ENCODE measurements at regions of chr3 and their contacts with region 1.

Region 1: DNA sequence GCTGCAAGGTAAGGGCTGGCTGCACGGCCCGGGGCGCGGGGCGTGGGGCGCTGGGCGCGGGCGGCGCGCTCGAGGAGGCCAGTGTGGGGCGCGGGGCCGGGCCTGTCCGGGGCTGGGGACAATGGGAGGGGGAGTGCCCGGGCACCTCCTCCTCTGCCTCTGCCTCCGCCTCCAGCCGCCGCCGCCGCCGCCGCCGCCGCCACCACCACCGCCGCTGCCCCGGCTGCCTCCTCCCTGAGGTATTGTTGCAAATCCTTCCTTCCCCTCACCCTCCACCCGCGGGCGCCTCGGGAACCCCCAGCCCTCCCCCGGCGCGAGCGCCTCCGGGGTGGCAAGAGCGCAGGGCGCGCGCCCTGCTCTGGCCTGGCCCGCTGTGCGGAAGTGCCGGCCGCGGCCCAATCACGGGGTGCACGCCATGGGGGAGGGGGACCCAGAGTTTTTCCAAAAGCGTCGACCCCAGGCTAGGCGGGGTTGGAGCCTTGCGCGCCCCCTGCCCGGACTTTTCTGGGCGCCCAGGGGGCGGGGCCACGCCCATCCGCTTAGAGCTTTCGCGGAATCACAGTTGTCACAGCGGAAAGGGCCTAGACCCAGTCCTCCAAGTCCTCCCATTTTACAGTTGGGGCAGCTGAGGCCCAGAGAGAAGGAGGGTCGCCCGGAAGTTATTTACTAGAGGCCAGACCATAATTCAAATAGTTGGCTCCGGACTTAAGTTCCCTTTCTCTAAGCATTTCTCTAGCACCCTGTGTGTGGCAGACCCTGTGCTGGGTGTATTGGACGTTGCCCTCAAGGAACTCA is at the start of gene LPP:
- DNase-seq: peak; percentile 64 to 88 (median 77)
- ATAC-seq: peak; percentile 92
- H3K4me3 ChIP-seq: peak within 1 kb of the TSS; percentile 76
- H3K4me3 Mint-ChIP-seq: peak within 1 kb of the TSS; percentile 78 to 95 (median 91)
- H3K27ac ChIP-seq: peak within 1 kb of the TSS; percentile 75
- H3K27ac Mint-ChIP-seq: peak within 1 kb of the TSS; percentile 58 to 98 (median 88)
- H3K4me1 ChIP-seq: peaks cover 21 to 29% of the 10 kb centered on the region in 2 donors
- H3K4me1 Mint-ChIP-seq: peaks cover 40 to 67% (median 58%) of the 10 kb centered on the region in 7 donors
- H3K27me3 ChIP-seq: no peaks in the 10 kb centered on the region
- H3K27me3 Mint-ChIP-seq: no peaks in the 10 kb centered on the region
- total RNA-seq, gene LPP: 12.5 to 95.2 (median 52.3) TPM

Region 2: GRCh38 chr3:187802928-187803259 is 351.3 kb before region 1 on chr3:
- CTCF ChIA-PET with region 1: no interaction called
- POLR2A ChIA-PET with region 1: no interaction called
- intact Hi-C with region 1: loop called in 1 of 2 experiments (anchors 1 kb)
- DNase-seq: peak in 1 of 9 donors; percentile 66
- ATAC-seq: peak; percentile 56
- H3K4me3 ChIP-seq: no peak overlapping the region
- H3K4me3 Mint-ChIP-seq: peak overlapping the region in 6 of 10 donors; percentile 14 to 69 (median 34)
- H3K27ac ChIP-seq: no peak overlapping the region
- H3K27ac Mint-ChIP-seq: peak overlapping the region in 1 of 9 donors; percentile 90
- H3K4me1 ChIP-seq: peaks cover 22 to 47% of the 10 kb centered on the region in 2 donors
- H3K4me1 Mint-ChIP-seq: peaks cover 23 to 93% (median 44%) of the 10 kb centered on the region in 7 donors
- H3K27me3 ChIP-seq: no peaks in the 10 kb centered on the region
- H3K27me3 Mint-ChIP-seq: no peaks in the 10 kb centered on the region

Region 3: DNA sequence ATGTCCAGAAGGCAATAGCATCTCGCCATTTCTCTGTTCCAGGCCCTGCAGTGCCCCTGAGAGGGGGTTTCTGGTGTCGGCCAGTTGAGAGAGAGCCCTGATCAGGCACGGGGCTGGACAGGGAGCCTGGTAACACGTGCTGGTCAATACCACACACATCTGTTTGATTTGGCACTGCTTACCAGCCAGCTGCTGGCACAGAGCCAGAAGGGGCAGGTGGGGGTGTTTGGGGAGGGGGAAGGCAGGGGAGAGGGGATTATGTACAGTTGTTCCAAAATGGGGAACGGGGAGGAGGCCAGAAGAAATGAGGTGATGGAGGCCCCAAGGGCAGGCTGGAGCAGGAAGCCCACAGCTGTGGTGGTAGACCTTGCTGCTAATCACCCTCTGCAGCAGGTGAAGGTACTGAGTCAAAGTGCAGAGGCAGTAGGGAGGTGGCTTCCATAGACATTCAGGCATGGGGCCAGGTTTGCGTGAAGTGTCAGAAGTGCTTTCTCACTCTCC is 153.8 kb before region 1 on chr3:
- CTCF ChIA-PET with region 1: no interaction called
- POLR2A ChIA-PET with region 1: no interaction called
- intact Hi-C with region 1: loop called in 1 of 2 experiments (anchors 5 kb)
- DNase-seq: no peak
- ATAC-seq: no peak
- H3K4me3 ChIP-seq: peak overlapping the region; percentile 13
- H3K4me3 Mint-ChIP-seq: peak overlapping the region; percentile 42 to 83 (median 77)
- H3K27ac ChIP-seq: no peak overlapping the region
- H3K27ac Mint-ChIP-seq: peak overlapping the region; percentile 27 to 94 (median 85)
- H3K4me1 ChIP-seq: peaks cover 26 to 37% of the 10 kb centered on the region in 2 donors
- H3K4me1 Mint-ChIP-seq: peaks cover 41 to 75% (median 64%) of the 10 kb centered on the region in 7 donors
- H3K27me3 ChIP-seq: no peaks in the 10 kb centered on the region
- H3K27me3 Mint-ChIP-seq: no peaks in the 10 kb centered on the region

Region 4: DNA sequence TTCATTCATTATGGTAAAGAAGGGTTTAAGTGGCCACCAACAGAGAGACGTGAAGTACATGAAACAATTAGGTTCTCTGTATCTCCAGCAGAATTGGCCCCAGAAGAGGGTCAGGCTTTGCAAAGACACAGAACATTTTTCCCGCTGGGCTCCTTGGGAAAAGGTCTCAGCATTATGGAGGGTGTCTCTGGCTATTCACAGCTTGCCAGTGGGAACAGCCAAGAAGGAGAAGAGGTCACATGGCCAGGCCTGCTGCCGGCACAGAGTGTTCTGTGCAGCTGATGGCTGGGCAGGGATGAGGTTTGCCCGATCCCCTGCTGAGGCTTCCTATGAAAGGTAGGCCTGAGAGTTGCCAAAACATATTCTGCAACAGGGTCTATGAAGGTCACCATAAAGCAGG is 78.0 kb before region 1 on chr3:
- CTCF ChIA-PET with region 1: no interaction called
- POLR2A ChIA-PET with region 1: no interaction called
- intact Hi-C with region 1: no loop called
- DNase-seq: no peak
- ATAC-seq: no peak
- H3K4me3 ChIP-seq: no peak overlapping the region
- H3K4me3 Mint-ChIP-seq: no peak overlapping the region
- H3K27ac ChIP-seq: no peak overlapping the region
- H3K27ac Mint-ChIP-seq: no peak overlapping the region
- H3K4me1 ChIP-seq: no peaks in the 10 kb centered on the region
- H3K4me1 Mint-ChIP-seq: no peaks in the 10 kb centered on the region
- H3K27me3 ChIP-seq: no peaks in the 10 kb centered on the region
- H3K27me3 Mint-ChIP-seq: peaks cover 0 to 1% (median 0%) of the 10 kb centered on the region in 5 donors

Region 5: DNA sequence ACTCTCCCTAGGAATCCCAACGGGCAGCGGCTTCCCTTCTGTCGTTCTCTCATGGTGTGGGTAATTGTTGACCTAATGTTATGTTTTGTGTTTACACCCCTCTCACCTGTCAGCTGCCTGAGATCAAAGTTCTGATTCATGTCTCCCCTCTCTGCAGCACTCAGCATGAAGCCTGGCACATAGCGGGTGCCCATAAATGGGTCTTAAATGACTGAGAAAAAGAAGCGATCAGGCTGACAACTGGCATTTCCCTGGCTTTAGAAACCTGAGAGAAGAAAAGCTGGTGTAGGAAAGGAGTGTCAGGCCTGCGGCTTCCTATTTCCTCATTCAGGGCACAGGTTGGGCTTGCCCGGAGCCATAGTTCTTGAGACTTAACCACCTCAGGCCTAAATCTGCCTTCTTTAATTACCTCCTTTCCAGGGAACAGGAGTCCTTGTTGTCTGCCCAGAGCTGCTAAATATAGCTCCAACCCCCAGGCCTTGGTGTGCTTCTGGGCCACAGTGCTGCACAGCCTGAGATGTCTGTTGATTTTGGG is 31.6 kb after region 1 on chr3:
- CTCF ChIA-PET with region 1: no interaction called
- POLR2A ChIA-PET with region 1: no interaction called
- intact Hi-C with region 1: loop called in 1 of 2 experiments (anchors 5 kb)
- DNase-seq: peak in 1 of 9 donors; percentile 11
- ATAC-seq: peak; percentile 27
- H3K4me3 ChIP-seq: no peak overlapping the region
- H3K4me3 Mint-ChIP-seq: peak overlapping the region in 8 of 10 donors; percentile 14 to 67 (median 44)
- H3K27ac ChIP-seq: no peak overlapping the region
- H3K27ac Mint-ChIP-seq: peak overlapping the region; percentile 15 to 86 (median 57)
- H3K4me1 ChIP-seq: peaks cover 5 to 12% of the 10 kb centered on the region in 2 donors
- H3K4me1 Mint-ChIP-seq: peaks cover 31 to 55% (median 49%) of the 10 kb centered on the region in 7 donors
- H3K27me3 ChIP-seq: no peaks in the 10 kb centered on the region
- H3K27me3 Mint-ChIP-seq: no peaks in the 10 kb centered on the region

Region 6: DNA sequence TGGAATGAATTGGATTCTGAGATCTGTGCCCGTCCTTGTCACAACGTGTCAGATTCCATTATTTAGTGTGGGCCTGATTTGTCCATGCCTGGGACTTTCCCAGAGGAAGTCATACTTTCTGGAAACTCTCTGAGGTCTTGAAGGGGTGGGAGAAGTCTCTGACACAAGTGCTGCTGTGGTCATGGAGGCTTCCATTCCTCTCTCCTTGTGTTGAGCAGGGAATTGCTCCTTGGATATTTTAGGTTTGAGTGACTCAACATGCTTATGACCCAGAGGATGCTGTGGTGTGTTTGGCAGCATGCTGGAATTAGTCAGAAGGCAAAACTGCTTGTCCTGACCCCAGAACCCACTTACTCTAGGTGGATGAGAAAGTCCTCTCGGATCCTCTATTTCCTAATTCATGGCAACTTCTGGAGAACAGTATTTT is 131.9 kb after region 1 on chr3:
- CTCF ChIA-PET with region 1: no interaction called
- POLR2A ChIA-PET with region 1: no interaction called
- intact Hi-C with region 1: no loop called
- DNase-seq: no peak
- ATAC-seq: no peak
- H3K4me3 ChIP-seq: no peak overlapping the region
- H3K4me3 Mint-ChIP-seq: no peak overlapping the region
- H3K27ac ChIP-seq: no peak overlapping the region
- H3K27ac Mint-ChIP-seq: peak overlapping the region in 2 of 9 donors; percentile 14 to 39
- H3K4me1 ChIP-seq: peaks cover 7% of the 10 kb centered on the region in 2 donors
- H3K4me1 Mint-ChIP-seq: peaks cover 19 to 49% (median 28%) of the 10 kb centered on the region in 7 donors
- H3K27me3 ChIP-seq: no peaks in the 10 kb centered on the region
- H3K27me3 Mint-ChIP-seq: no peaks in the 10 kb centered on the region

Region 7: GRCh38 chr3:188400494-188401243 is 246.5 kb after region 1 on chr3:
- CTCF ChIA-PET with region 1: no interaction called
- POLR2A ChIA-PET with region 1: no interaction called
- intact Hi-C with region 1: loop called in 1 of 2 experiments (anchors 5 kb)
- DNase-seq: no peak
- ATAC-seq: peak; percentile 75
- H3K4me3 ChIP-seq: no peak overlapping the region
- H3K4me3 Mint-ChIP-seq: peak overlapping the region in 1 of 10 donors; percentile 42
- H3K27ac ChIP-seq: no peak overlapping the region
- H3K27ac Mint-ChIP-seq: peak overlapping the region in 2 of 9 donors; percentile 58 to 69
- H3K4me1 ChIP-seq: peaks cover 0 to 4% of the 10 kb centered on the region in 2 donors
- H3K4me1 Mint-ChIP-seq: peaks cover 28 to 63% (median 49%) of the 10 kb centered on the region in 7 donors
- H3K27me3 ChIP-seq: no peaks in the 10 kb centered on the region
- H3K27me3 Mint-ChIP-seq: no peaks in the 10 kb centered on the region

Region 8: DNA sequence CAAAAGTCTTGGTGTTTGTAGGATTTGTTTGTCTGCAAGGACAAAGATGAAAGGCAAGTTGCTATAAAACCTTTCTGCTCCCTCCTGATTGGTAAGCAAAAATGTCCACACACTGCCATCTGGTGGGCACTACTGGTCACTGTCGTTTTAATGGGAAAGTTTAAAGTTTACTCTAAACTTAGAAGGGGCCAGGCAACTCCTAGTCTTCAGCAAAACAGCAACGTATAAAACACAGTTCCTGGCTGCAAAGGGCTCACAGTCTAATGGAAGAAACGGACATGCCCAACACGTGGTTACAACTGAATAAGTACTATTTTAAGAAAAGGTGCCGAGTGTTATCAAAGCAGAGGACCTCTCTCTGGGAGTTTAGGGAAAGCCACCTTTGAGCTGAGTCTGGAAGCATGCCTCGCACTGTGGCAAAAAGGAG is 993.9 kb after region 1 on chr3:
- CTCF ChIA-PET with region 1: no interaction called
- POLR2A ChIA-PET with region 1: no interaction called
- intact Hi-C with region 1: loop called in 1 of 2 experiments (anchors 1 kb)
- DNase-seq: peak; percentile 22 to 61 (median 51)
- ATAC-seq: peak; percentile 85
- H3K4me3 ChIP-seq: no peak overlapping the region
- H3K4me3 Mint-ChIP-seq: no peak overlapping the region
- H3K27ac ChIP-seq: no peak overlapping the region
- H3K27ac Mint-ChIP-seq: peak overlapping the region in 1 of 9 donors; percentile 21
- H3K4me1 ChIP-seq: peaks cover 0 to 16% of the 10 kb centered on the region in 2 donors
- H3K4me1 Mint-ChIP-seq: peaks cover 6 to 35% (median 8%) of the 10 kb centered on the region in 7 donors
- H3K27me3 ChIP-seq: no peaks in the 10 kb centered on the region
- H3K27me3 Mint-ChIP-seq: peaks cover 0 to 20% (median 0%) of the 10 kb centered on the region in 5 donors

Measured in naive thymus-derived CD4-positive, alpha-beta T cell (primary cell).